Activated B cell treated with CpG ODN at 0.5 μM for 24 hours (primary cell): ENCODE measurements at regions of chr3 and their contacts with region 1.

Region 1: GRCh38 chr3:170357176-170357919 is at the start of gene SKIL:
- DNase-seq: peak; percentile 92
- ATAC-seq: peak; percentile 53
- H3K4me3 Mint-ChIP-seq: peak within 1 kb of the TSS; percentile 89
- H3K27ac Mint-ChIP-seq: peak within 1 kb of the TSS; percentile 97
- H3K4me1 Mint-ChIP-seq: peaks cover 80% of the 10 kb centered on the region
- H3K27me3 Mint-ChIP-seq: no peaks in the 10 kb centered on the region
- CTCF ChIP-seq: no peak
- total RNA-seq, gene SKIL: 112 and 123 TPM in 2 replicates

Region 2: GRCh38 chr3:169668957-169669681 is 688.2 kb before region 1 on chr3:
- CTCF ChIA-PET with region 1: no interaction called
- POLR2A ChIA-PET with region 1: no interaction called
- intact Hi-C with region 1: no loop called
- DNase-seq: peak; percentile 53
- ATAC-seq: peak; percentile 81
- H3K4me3 Mint-ChIP-seq: peak overlapping the region; percentile 54
- H3K27ac Mint-ChIP-seq: no peak overlapping the region
- H3K4me1 Mint-ChIP-seq: peaks cover 21% of the 10 kb centered on the region
- H3K27me3 Mint-ChIP-seq: peaks cover 81% of the 10 kb centered on the region
- CTCF ChIP-seq: no peak

Region 3: GRCh38 chr3:169772897-169773828 is 584.2 kb before region 1 on chr3 and contains the start of gene MYNN:
- CTCF ChIA-PET with region 1: no interaction called
- POLR2A ChIA-PET with region 1: interaction called, 25 read pairs
- intact Hi-C with region 1: loop called (anchors 1 kb)
- DNase-seq: peak; percentile 91
- ATAC-seq: peak; percentile 77
- H3K4me3 Mint-ChIP-seq: peak within 1 kb of the TSS; percentile 99
- H3K27ac Mint-ChIP-seq: peak within 1 kb of the TSS; percentile 99
- H3K4me1 Mint-ChIP-seq: peaks cover 50% of the 10 kb centered on the region
- H3K27me3 Mint-ChIP-seq: no peaks in the 10 kb centered on the region
- CTCF ChIP-seq: no peak
- total RNA-seq, gene MYNN: 23.9 and 24.8 TPM in 2 replicates

Region 4: DNA sequence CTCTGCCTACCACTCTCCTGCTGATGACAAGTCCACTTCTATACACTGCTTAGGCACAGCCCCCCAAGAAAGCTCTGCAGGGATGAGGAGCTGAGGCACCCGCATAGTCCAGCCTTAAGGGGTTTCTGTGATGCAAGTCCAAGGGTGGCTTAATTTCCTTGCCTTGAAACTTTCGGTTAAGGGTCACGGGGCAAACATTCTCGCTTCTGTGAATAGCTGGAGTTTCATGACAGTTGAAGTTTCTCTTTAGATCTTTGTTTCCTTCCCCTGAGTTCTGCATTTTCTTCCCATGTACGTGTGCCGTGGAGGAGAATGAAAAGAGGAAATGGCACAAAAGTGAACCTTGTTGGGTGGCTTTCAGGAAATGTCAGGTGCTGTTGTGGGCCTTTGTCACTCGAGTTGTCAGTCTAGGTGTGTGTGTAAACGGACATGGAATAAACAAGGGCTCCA is 312.5 kb before region 1 on chr3:
- CTCF ChIA-PET with region 1: no interaction called
- POLR2A ChIA-PET with region 1: interaction called, 13 read pairs
- intact Hi-C with region 1: loop called (anchors 2 kb)
- DNase-seq: peak; percentile 45
- ATAC-seq: peak; percentile 77
- H3K4me3 Mint-ChIP-seq: peak overlapping the region; percentile 64
- H3K27ac Mint-ChIP-seq: peak overlapping the region; percentile 87
- H3K4me1 Mint-ChIP-seq: peaks cover 65% of the 10 kb centered on the region
- H3K27me3 Mint-ChIP-seq: no peaks in the 10 kb centered on the region
- CTCF ChIP-seq: no peak

Region 5: DNA sequence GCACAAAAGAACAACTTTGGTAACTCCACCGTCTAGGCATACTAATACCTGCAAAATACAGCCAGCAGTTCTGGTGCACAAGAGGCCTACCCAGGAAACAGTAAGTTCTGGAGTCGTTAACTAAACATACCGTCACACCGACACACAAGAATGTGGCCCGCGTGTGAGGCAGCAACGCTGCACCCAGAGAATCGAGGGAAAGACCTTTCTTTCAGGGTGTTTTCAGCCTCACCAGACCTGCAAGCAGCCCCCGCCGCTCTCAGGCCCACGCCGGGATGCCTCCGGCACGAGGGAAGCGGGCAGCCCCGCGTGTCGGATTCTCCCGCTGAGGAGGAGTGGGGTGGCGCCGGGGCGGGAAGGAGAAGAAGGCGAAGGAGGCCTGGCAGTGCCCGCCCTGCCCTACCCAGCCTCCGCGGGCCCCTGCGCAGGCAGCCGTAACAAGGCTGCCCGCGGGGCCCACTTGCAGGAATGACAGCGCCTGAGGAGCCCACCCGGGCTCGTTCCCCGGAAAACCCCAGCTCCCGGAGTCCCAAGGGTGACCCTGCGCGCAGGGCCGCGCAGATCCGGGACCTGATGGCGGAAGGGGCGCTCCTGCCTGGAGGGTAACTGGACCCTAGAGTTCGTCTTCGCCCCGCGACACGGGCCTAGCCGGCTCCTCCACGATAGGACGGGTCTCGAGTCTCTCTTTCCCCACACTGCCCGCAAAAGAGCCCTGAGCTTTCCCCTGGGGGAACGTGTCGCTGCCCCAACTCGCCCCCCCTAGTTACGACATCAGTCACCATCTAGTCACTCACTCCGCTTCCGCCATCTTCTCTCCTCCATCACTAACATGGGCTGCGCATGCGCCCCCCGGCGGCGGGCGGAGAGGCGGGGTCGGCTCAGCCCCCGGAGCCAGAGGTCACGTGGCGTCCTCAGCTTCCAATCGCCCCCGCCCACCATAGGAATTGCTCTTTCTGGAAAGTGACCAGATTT is 176.2 kb before region 1 on chr3 and contains the start of gene PHC3:
- CTCF ChIA-PET with region 1: no interaction called
- POLR2A ChIA-PET with region 1: interaction called, 25 read pairs
- intact Hi-C with region 1: loop called (anchors 1 kb)
- DNase-seq: peak; percentile 92
- ATAC-seq: peak; percentile 80
- H3K4me3 Mint-ChIP-seq: peak within 1 kb of the TSS; percentile 96
- H3K27ac Mint-ChIP-seq: peak within 1 kb of the TSS; percentile 98
- H3K4me1 Mint-ChIP-seq: peaks cover 32% of the 10 kb centered on the region
- H3K27me3 Mint-ChIP-seq: no peaks in the 10 kb centered on the region
- CTCF ChIP-seq: no peak
- total RNA-seq, gene PHC3: 105 TPM in 2 replicates

Region 6: GRCh38 chr3:170338690-170339340 is 18.5 kb before region 1 on chr3:
- CTCF ChIA-PET with region 1: no interaction called
- POLR2A ChIA-PET with region 1: interaction called, 15 read pairs
- intact Hi-C with region 1: no loop called
- DNase-seq: no peak
- ATAC-seq: no peak
- H3K4me3 Mint-ChIP-seq: no peak overlapping the region
- H3K27ac Mint-ChIP-seq: no peak overlapping the region
- H3K4me1 Mint-ChIP-seq: no peaks in the 10 kb centered on the region
- H3K27me3 Mint-ChIP-seq: no peaks in the 10 kb centered on the region
- CTCF ChIP-seq: no peak

Region 7: DNA sequence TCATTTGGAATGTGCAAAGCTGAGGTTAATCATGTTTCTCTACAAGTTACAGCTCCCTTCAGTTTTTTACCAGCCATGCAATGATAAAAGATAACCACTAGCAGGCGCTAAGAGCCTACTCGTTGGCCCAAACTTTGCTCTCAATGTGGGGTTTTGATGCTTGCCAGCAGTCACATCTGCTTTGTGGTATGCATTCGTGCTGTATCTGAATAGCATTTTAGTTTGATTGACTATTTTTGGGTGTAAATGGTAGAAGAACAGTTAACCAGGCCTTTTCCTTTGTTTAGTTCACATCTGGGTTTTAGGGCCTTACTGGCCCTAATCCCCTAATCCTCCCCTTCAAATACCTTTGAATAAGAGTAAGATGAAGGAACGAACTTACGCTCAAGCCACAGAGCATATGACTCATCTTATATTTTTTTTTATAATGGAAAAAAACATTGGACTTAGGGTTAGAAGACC is 56.9 kb after region 1 on chr3:
- CTCF ChIA-PET with region 1: interaction called, 25 read pairs
- POLR2A ChIA-PET with region 1: interaction called, 6 read pairs
- intact Hi-C with region 1: loop called (anchors 1 kb)
- DNase-seq: no peak
- ATAC-seq: peak; percentile 72
- H3K4me3 Mint-ChIP-seq: no peak overlapping the region
- H3K27ac Mint-ChIP-seq: no peak overlapping the region
- H3K4me1 Mint-ChIP-seq: peaks cover 9% of the 10 kb centered on the region
- H3K27me3 Mint-ChIP-seq: peaks cover 15% of the 10 kb centered on the region
- CTCF ChIP-seq: peak; percentile 98